Heart left ventricle (tissue), 16 donors: ENCODE measurements at regions of chr2 and their contacts with region 1.

Region 1: GRCh38 chr2:177164584-177165052 is 48.0 kb upstream of the HNRNPA3 start:
- DNase-seq: peak; percentile 78 to 89 (median 81)
- ATAC-seq: peak; percentile 86 to 93 (median 89)
- H3K4me3 ChIP-seq: peak overlapping the region in 11 of 12 donors; percentile 23 to 64 (median 47)
- H3K27ac ChIP-seq: peak overlapping the region; percentile 80 to 93 (median 85)
- H3K4me1 ChIP-seq: peaks cover 5 to 28% (median 17%) of the 10 kb centered on the region in 12 donors
- H3K27me3 ChIP-seq: no peaks in the 10 kb centered on the region
- CTCF ChIP-seq: peak; percentile 99 to 100 (median 100)
- POLR2A ChIP-seq: no peak

Region 2: DNA sequence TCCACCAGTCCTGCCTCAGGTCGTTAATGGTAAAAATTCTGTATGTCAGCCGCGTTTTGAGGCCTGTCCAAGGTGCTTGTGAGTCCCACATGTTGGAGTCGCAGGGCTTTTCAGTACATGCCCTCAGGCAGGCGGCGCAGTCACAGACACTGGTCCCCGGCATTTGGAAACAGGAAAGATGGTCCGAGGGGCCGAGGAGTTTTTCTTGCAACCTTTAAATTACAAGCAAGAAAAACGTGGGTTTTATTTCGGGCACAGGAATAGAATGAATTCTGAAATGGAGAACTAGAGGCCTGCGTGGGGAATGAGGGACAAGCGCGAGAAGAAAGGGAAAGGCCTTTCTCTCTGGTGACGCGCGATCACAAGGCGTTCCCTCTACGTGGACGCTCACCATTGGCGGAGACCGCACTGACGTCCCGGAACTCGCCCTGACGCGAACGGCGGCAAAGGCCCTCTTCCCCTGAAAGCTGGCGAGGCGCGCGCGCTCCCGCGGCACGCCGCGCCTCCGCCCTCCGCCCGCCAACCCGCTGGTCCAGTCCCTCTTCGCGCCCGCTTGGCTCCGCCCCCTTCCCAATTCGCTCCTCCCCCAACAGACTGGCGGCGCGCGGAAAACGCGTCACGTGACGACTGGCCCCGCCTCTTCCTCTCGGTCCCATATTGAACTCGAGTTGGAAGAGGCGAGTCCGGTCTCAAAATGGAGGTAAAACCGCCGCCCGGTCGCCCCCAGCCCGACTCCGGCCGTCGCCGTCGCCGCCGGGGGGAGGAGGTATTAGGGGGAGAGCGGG is 47.7 kb after region 1 on chr2 and contains the start of gene HNRNPA3:
- intact Hi-C with region 1: loop called in 5 of 10 experiments (anchors 1 to 5 kb)
- DNase-seq: peak; percentile 99 to 100 (median 99)
- ATAC-seq: peak; percentile 94 to 97 (median 96)
- H3K4me3 ChIP-seq: peak within 1 kb of the TSS; percentile 60 to 96 (median 82)
- H3K27ac ChIP-seq: peak within 1 kb of the TSS; percentile 95 to 100 (median 99)
- H3K4me1 ChIP-seq: peaks cover 10 to 52% (median 45%) of the 10 kb centered on the region in 12 donors
- H3K27me3 ChIP-seq: no peaks in the 10 kb centered on the region
- CTCF ChIP-seq: peak in 9 of 12 donors; percentile 19 to 57 (median 35)
- POLR2A ChIP-seq: peak; percentile 30 to 86
- total RNA-seq, gene HNRNPA3: 12.7 to 110 (median 73.3) TPM

Region 3: GRCh38 chr2:177419274-177419673 is 254.7 kb after region 1 on chr2:
- intact Hi-C with region 1: loop called in 9 of 10 experiments (anchors 2 to 10 kb)
- DNase-seq: no peak
- ATAC-seq: no peak
- H3K4me3 ChIP-seq: no peak overlapping the region
- H3K27ac ChIP-seq: no peak overlapping the region
- H3K4me1 ChIP-seq: peaks cover 0 to 47% (median 2%) of the 10 kb centered on the region in 12 donors
- H3K27me3 ChIP-seq: no peaks in the 10 kb centered on the region
- CTCF ChIP-seq: no peak
- POLR2A ChIP-seq: no peak

Region 4: GRCh38 chr2:177618255-177619253 is 453.9 kb after region 1 on chr2:
- intact Hi-C with region 1: loop called in 2 of 10 experiments (anchors 10 kb)
- DNase-seq: peak; percentile 91 to 96 (median 93)
- ATAC-seq: peak; percentile 96 to 99 (median 98)
- H3K4me3 ChIP-seq: peak overlapping the region; percentile 62 to 94 (median 72)
- H3K27ac ChIP-seq: peak overlapping the region; percentile 92 to 100 (median 97)
- H3K4me1 ChIP-seq: peaks cover 0 to 19% (median 7%) of the 10 kb centered on the region in 12 donors
- H3K27me3 ChIP-seq: no peaks in the 10 kb centered on the region
- CTCF ChIP-seq: no peak
- POLR2A ChIP-seq: peak in 1 of 2 donors; percentile 50

Region 5: DNA sequence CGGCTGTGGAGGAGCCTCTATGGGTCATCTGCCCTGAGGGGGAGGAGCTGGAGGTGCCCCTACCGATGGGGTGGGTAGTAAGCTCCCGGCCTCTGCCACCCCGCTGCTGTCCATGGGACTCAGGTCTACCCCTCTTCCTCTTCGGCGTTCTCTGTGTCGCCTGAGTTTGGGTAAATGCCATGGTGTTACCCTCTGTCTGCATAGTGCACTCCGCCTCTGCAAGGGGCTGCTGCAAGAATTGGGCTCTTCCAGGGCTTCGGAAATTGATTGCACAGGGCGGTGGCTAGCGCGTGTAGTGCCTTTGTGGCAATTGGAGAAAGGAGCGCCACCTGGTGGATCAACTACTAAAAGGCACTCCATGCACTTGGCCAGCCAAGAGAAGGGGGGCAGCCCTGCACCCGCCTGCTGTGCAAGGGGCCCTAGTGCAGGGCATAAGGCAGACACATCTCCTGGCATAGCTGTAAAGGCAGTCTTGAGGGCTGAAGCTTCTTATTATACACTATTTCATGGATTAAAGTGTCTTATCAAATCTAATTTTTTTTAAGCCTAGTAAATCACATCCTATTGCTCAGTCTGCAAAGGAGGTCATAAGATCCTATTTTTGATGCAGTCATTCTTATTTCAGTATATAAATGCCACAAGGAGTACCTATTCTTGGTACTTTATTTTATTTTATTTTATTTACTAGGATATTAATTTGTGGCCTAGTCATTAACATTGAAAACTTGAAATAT is 599.1 kb after region 1 on chr2:
- intact Hi-C with region 1: loop called in 8 of 10 experiments (anchors 5 to 10 kb)
- DNase-seq: peak; percentile 70 to 81 (median 74)
- ATAC-seq: peak; percentile 49 to 89 (median 86)
- H3K4me3 ChIP-seq: peak overlapping the region in 1 of 12 donors; percentile 24
- H3K27ac ChIP-seq: no peak overlapping the region
- H3K4me1 ChIP-seq: peaks cover 0 to 15% (median 2%) of the 10 kb centered on the region in 12 donors
- H3K27me3 ChIP-seq: no peaks in the 10 kb centered on the region
- CTCF ChIP-seq: peak; percentile 74 to 90 (median 82)
- POLR2A ChIP-seq: no peak